ENCODE measurements at regions of chr3 and their contacts with region 1.

Region 1: GRCh38 chr3:5122030-5122740 is at the start of gene ARL8B:
- DNase-seq: no peak
- H3K4me3 ChIP-seq: peak within 1 kb of the TSS; percentile 93
- CTCF ChIP-seq: peak; percentile 96

Region 2: DNA sequence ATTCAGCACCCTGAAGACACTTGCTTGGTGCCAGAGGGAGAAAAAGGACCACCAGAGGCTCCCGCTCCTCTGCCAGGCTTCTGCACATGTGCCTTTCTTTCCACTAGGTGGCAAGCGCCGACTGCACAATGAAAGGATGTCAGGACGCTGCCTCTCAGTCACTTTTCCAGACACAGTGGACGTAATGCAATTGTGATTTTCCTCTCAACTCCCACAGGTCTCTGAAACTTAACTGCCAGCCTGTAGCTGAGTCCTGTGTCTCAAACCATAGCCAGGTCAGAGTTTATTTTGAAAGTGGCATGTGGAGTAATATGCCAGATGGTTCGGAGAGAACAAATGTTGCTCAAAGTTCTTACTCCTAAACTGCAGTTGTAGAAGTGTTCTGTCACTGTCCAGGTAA is 466.1 kb before region 1 on chr3:
- CTCF ChIA-PET with region 1: interaction called, 11 read pairs
- POLR2A ChIA-PET with region 1: no interaction called
- DNase-seq: no peak
- H3K4me3 ChIP-seq: no peak overlapping the region
- CTCF ChIP-seq: peak; percentile 94

Region 3: GRCh38 chr3:5102532-5102931 is 19.7 kb before region 1 on chr3:
- CTCF ChIA-PET with region 1: interaction called, 10 read pairs
- POLR2A ChIA-PET with region 1: no interaction called
- DNase-seq: no peak
- H3K4me3 ChIP-seq: no peak overlapping the region
- CTCF ChIP-seq: no peak

Region 4: GRCh38 chr3:5112043-5112442 is 10.1 kb before region 1 on chr3:
- CTCF ChIA-PET with region 1: interaction called, 17 read pairs
- POLR2A ChIA-PET with region 1: interaction called, 3 read pairs
- DNase-seq: no peak
- H3K4me3 ChIP-seq: no peak overlapping the region
- CTCF ChIP-seq: no peak

Region 5: DNA sequence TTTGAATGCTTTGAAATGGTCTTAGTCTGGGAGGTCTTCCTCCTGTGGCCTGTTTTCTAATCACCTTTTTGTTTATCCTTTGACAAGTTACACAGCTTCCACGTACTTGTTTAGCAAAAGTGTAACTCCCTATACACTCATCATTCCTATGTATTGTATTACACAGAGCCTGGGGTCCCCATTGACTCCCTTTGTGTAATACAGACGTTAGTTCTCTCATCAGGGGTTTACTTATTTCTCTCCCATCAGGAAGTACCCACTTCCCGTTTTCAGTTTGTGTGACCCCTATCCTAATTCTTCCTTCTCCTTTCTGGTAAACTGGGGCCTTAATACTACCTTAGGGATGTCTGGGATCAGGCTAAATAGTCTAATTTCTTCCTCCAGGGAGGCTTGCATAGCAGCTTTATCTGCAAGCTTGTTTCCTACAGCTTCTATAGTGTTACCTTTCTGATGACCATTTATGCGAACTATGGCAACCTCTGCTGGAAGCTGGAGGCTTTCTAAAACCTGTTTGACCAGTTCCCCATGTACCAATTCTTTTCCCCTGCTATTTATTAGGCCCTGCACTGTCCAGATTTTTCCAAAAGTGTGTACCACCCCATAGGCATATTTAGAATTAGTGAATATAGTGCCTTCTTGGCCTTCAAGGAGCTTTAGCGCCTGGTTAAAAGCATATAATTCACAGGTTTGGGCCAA is 22.3 kb after region 1 on chr3:
- CTCF ChIA-PET with region 1: interaction called, 10 read pairs
- POLR2A ChIA-PET with region 1: no interaction called
- DNase-seq: no peak
- H3K4me3 ChIP-seq: no peak overlapping the region
- CTCF ChIP-seq: no peak

Region 6: GRCh38 chr3:5187156-5187919 is 65.2 kb after region 1 on chr3 and contains the start of gene EDEM1:
- CTCF ChIA-PET with region 1: interaction called, 14 read pairs
- POLR2A ChIA-PET with region 1: no interaction called
- DNase-seq: peak; percentile 41
- H3K4me3 ChIP-seq: peak within 1 kb of the TSS; percentile 90
- CTCF ChIP-seq: no peak

Region 7: GRCh38 chr3:5463991-5464390 is 341.8 kb after region 1 on chr3:
- CTCF ChIA-PET with region 1: no interaction called
- POLR2A ChIA-PET with region 1: no interaction called
- DNase-seq: no peak
- H3K4me3 ChIP-seq: no peak overlapping the region
- CTCF ChIP-seq: no peak

Measured in AG04449 (cell line).